ENCODE measurements at regions of chr9 and their contacts with region 1.

Region 1: DNA sequence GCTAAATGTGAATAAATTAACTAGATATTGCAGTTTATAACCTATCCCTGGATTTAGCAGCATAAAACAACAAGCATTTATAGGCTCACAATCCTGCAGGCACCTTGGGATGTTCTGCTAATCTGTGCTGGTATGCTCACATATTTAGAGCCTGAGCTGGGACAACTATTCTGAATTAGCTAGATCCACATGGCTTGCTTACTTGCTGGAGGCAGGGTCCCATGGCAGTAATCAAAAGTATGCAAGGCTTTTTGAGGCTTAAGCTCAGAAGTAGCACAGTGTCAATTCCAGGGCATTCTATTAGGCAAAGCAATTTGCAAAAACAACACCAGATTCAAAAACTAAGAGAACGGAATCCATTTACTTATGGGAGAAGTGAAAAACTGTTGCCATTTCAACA is 745.0 kb upstream of the ACO1 start:
- DNase-seq: no peak
- H3K4me3 ChIP-seq: no peak overlapping the region
- H3K27ac ChIP-seq: no peak overlapping the region
- H3K4me1 ChIP-seq: no peaks in the 10 kb centered on the region
- H3K27me3 ChIP-seq: no peaks in the 10 kb centered on the region
- CTCF ChIP-seq: no peak

Region 2: GRCh38 chr9:31700252-31701045 is 61.0 kb after region 1 on chr9:
- intact Hi-C with region 1: loop called (anchors 10 kb)
- DNase-seq: no peak
- H3K4me3 ChIP-seq: no peak overlapping the region
- H3K27ac ChIP-seq: no peak overlapping the region
- H3K4me1 ChIP-seq: no peaks in the 10 kb centered on the region
- H3K27me3 ChIP-seq: no peaks in the 10 kb centered on the region
- CTCF ChIP-seq: no peak